ENCODE measurements at regions of chr5 and their contacts with region 1.

Region 1: DNA sequence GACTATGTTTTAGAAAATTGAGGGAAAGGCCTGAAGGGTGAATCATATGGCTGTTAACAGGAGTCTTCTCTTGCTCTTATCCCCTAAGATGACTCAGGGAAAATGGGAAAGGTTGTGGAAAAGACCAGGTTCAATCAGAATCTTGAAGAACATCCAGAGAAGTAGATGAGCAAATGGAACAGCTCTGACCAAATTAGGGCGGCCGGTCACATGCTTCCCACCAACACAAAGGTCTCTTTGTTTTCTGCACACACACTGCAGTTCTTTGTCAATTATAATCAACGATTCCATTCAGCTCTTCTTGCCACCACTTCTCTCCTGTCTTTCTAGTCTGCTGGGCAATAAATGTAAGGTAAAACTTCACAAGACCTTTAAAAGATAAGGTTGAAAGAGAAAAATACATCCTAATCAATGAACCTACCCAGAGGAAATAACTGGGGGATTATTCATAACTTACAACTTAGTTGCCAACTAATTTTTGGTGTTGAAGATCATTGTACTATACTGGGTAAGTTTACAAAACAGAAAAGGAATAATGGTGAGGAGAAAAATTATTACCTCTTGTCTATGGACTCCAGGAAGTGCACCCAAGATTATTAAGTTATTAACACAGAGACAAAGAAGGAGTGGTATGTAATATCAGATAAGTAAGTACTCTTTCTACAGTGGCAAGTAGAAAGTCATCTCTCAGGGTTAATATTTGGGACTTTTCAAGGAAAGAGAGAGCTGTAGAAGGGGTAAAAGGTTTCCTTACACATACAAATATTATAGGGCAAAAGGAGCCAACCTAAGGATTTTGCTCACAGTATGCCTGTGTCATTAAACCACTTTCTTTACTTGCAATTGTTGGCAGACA is 441.9 kb upstream of the PIK3R1 start:
- DNase-seq: peak; percentile 10 to 92 (median 72)
- H3K4me3 ChIP-seq: peak overlapping the region in 2 of 59 donors; percentile 6 to 10
- H3K27ac ChIP-seq: peak overlapping the region; percentile 31 to 98 (median 89)
- H3K27me3 ChIP-seq: no peaks in the 10 kb centered on the region
- CTCF ChIP-seq: peak in 5 of 56 donors; percentile 10 to 19 (median 16)

Region 2: GRCh38 chr5:67731886-67732285 is 41.8 kb before region 1 on chr5:
- intact Hi-C with region 1: loop called in 1 of 2 experiments (anchors 2 kb)
- DNase-seq: peak in 1 of 10 donors; percentile 21
- H3K4me3 ChIP-seq: peak overlapping the region in 1 of 59 donors; percentile 36
- H3K27ac ChIP-seq: peak overlapping the region in 26 of 59 donors; percentile 9 to 82 (median 48)
- H3K27me3 ChIP-seq: no peaks in the 10 kb centered on the region
- CTCF ChIP-seq: peak in 7 of 56 donors; percentile 7 to 39 (median 28)

Region 3: DNA sequence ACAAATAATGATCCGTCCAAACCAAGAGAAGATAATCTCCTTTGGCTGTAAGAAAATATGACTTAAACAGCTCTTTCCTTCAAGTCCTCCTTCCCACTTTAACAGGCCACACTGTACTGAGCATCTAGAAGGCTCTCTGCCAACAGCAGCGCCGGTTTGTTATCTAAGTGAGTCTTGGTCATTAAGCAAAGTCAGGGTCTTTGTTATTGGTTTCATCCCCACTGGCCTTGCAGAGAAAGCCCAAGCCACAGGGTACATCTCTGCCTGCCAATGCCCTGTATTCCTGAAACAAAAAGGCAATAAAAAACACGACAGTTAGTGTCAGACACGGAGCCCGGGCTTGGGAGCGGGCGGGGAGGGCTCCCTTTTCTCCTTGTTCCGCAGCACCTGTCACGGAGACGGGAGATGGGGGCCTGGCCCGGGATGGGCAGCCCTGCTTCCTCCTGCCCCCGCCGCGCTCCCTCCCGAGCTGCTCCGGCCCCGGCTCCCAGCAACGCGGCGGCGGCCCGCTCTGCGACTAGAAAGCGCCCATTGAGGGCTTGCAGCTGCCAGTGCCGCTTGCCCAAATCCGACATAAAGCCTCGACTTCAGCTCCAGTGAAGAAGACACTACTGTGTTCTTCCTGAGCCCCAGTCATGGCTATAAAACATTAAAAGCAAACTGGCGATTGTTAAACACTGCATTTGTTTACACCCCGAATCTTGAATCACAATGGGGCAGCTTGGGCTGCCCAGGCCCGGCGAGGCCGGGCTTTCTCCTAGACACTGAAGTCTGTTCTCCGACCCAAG is 413.8 kb after region 1 on chr5:
- intact Hi-C with region 1: no loop called
- DNase-seq: peak; percentile 73 to 93 (median 89)
- H3K4me3 ChIP-seq: peak overlapping the region; percentile 14 to 67 (median 45)
- H3K27ac ChIP-seq: peak overlapping the region; percentile 75 to 99 (median 96)
- H3K27me3 ChIP-seq: no peaks in the 10 kb centered on the region
- CTCF ChIP-seq: peak in 5 of 56 donors; percentile 9 to 20 (median 17)

Measured in dorsolateral prefrontal cortex (tissue), 120 donors.